BJ (cell line): ENCODE measurements at regions of chr17 and their contacts with region 1.

Region 1: DNA sequence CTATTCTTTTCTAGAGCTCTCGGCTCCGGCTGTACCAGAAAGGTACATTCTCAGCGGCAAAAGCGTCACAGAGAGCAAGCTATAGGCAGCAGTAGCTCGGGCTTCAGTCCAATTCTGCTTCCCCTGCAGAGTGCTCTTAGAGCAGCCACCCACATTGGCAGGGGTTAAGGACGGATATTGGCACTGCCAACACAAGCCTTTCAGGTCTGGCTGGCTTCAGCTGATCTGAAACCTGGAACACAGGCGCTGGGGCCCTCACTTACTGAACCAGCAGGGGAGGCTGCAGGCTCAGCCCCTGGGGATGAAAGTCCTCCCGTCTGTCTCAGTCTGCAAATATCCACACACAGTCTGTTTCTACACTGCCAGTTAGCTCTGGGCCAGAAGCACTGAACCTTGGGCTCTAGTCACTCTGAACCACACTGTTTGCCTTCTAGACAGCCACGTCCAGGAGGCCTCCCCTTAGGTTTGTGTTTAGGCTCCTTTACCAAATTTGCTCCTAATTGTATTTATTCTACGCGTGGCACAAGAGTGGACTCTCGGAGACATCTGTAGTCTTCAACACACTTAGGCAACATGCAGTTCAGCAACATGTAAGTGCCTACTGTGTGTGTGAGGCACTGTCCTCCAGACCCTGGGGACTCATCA is 40.1 kb downstream of the HIC1 start:
- DNase-seq: no peak
- H3K4me3 ChIP-seq: no peak overlapping the region
- H3K27me3 ChIP-seq: no peaks in the 10 kb centered on the region
- CTCF ChIP-seq: peak; percentile 59

Region 2: DNA sequence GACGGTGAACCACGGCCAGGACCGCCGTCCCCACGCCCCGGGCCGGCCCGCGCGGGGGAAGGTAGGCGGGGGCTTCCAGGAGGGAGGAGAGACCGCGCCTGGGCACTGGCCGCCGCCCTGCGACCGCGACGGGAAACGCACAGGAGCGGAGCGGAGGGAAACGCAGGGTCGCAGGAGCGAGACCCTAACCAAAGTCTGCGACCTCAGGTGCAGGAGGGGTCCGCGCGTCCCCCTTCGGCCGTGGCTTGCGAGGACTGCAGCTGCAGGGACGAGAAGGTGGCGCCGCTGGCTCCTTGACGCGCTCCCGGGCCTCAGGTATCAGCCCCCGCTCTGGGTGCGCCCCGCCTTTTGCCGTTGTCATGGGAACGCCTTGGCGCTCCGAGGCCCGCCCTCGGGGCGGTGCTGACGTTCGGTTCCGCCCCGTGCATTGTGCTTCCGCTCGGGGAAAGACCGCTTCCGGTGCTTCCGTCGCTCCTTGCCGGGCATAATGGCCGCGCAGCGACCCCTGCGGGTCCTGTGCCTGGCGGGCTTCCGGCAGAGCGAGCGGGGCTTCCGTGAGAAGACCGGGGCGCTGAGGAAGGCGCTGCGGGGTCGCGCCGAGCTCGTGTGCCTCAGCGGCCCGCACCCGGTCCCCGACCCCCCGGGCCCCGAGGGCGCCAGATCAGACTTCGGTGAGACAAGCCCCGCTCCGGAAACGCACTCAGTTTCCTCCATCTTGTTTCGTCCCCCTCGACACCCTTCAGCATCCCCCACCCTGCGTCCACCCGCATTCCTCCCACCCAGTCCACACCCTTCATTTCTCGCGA is 53.2 kb before region 1 on chr17 and contains the start of gene OVCA2:
- CTCF ChIA-PET with region 1: no interaction called
- POLR2A ChIA-PET with region 1: no interaction called
- DNase-seq: peak; percentile 55
- H3K4me3 ChIP-seq: peak within 1 kb of the TSS; percentile 84
- H3K27me3 ChIP-seq: no peaks in the 10 kb centered on the region
- CTCF ChIP-seq: peak; percentile 60
- polyA plus RNA-seq, gene OVCA2: 42.0 and 56.7 TPM in 2 replicates

Region 3: GRCh38 chr17:2064980-2065785 is 29.8 kb before region 1 on chr17:
- CTCF ChIA-PET with region 1: interaction called, 14 read pairs
- POLR2A ChIA-PET with region 1: no interaction called
- DNase-seq: no peak
- H3K4me3 ChIP-seq: no peak overlapping the region
- H3K27me3 ChIP-seq: no peaks in the 10 kb centered on the region
- CTCF ChIP-seq: peak; percentile 65

Region 4: DNA sequence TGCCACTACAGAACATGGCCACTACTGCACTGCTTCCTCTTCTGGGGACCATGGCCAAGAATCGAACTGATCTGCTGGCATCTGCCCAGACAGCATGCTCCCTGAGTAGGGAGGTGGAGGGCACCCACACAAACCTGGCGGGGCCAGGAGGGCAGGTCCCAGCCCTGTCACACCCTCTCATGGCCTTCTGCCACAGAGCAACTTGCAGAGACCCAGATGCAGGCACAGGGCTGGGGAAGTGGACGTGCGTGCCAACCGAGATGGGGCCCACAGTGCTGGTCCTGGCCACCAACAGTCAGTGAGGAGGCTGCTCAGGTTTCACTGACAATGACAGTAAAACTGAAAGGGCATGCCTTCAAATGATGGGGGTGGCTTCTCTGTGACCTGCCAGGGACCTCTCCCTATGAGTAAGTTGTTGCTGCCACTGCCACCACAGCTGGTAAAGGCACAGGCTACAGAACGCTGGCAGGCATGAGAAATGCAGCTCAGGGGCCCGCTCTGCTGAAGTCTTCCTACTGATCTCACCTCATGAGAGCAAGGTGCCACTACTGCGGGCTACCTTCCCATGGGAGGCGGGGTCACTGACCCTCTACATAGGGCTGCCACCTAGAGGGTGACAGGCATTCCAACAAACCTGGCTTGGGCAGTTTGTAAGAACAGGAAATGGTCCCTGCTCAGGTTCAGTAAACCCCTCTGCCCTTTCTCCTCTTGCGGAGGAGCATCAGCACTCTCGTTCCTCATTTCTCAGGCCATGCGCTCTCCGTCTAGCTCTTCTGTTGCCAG is 24.6 kb before region 1 on chr17:
- CTCF ChIA-PET with region 1: interaction called, 14 read pairs
- POLR2A ChIA-PET with region 1: no interaction called
- DNase-seq: no peak
- H3K4me3 ChIP-seq: no peak overlapping the region
- H3K27me3 ChIP-seq: no peaks in the 10 kb centered on the region
- CTCF ChIP-seq: no peak

Region 5: DNA sequence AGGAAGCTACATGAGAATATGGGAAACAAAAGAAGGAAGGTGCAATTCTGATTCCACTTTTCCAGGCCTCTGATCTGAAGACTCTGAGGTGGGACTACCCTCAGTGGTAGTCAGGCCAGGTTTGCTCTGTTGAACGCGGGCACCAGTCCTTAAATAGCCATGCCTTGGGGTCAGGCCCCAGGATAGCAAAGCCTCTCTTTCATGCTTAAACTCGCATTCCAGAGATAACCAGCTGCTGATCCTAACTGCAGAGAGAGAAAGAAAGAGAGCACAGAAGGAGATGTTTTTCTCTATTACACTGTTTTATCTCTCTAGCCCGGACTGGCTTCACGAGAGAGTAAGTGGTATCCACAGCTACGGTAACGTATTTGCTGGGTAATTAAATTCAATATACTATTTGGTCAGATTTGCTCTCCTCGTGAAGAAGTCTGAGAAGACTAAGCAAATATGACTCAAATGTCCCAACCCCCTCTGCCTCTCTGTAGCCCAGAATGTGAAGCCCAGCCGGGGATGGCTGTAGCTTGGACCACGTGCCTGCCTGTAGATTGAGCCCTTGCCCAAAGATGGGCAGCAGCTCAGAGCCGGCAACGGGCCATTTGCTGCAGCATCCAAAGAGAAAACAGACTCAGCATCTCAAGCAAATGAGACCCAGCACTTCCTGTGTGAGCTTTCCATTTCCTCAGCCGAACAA is 86.3 kb after region 1 on chr17:
- CTCF ChIA-PET with region 1: interaction called, 14 read pairs
- POLR2A ChIA-PET with region 1: no interaction called
- DNase-seq: no peak
- H3K4me3 ChIP-seq: no peak overlapping the region
- H3K27me3 ChIP-seq: no peaks in the 10 kb centered on the region
- CTCF ChIP-seq: no peak

Region 6: DNA sequence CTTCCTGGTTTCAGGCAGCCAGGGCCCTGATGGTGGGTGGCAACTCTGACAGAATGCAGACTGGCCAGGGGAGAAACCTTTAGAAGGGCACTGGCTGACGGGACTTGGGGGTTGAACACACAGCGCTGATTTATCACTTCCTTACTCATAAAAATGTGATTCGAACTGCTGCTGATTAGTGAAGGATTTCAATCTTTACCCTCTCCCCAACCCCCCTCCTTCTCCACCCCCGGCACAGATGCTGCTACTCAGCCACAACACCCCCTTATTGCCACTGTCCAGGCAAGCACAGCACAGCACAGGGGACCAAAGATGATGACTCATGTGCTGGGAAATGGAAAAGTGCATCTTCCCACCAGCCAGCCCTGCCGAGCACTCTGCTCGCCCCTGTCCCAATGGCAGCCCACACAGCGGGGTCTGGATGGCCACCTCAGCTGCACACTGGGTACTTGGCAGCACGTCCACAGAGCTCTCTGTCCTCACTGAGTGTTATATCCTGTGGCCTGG is 138.5 kb after region 1 on chr17:
- CTCF ChIA-PET with region 1: interaction called, 12 read pairs
- POLR2A ChIA-PET with region 1: no interaction called
- DNase-seq: peak; percentile 66
- H3K4me3 ChIP-seq: no peak overlapping the region
- H3K27me3 ChIP-seq: no peaks in the 10 kb centered on the region
- CTCF ChIP-seq: no peak